Activated B cell treated with CpG ODN at 0.5 μM for 24 hours (primary cell): ENCODE measurements at regions of chr1 and their contacts with region 1.

Region 1: DNA sequence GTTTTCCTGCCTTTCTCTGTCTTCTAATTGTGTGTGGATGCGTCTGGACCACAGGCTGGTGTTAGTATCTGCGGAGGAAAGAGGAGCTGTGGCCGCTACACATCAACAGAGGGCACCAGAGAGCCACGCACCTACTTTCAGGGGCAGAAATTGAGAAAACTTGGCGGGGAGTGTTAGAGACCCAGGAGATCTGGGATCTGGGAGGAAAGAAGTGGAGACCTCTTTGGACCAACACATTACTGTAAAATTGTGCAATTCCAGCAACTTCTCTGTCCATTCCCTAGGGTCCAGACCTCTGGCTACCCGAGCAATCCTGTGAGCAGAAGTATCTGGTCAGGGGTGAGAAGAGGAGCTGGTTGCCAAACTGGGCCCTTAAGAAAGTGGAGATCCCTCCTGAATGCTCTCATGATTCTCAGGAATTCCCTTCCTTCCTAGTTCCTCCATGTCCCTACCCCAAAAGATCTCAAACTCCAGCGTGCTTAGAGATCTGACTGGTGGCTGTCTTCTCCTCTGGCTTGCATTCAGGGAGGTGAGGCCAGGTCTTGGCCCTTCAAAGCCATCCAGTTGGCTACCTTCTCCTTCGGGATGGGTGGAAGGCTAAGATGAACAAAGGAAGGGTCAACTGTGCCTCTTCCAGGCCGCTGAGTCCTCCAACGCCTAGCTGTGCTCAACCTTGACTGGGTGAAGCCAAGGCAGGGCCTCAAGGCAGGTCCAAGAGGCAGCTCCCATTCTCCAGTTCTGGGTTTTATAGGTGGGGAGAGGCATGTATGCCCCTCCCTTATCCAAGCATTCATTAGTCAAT is 1.2 kb upstream of the KIRREL1 start:
- DNase-seq: peak; percentile 46
- ATAC-seq: peak; percentile 68
- H3K4me3 Mint-ChIP-seq: peak overlapping the region; percentile 79
- H3K27ac Mint-ChIP-seq: no peak overlapping the region
- H3K4me1 Mint-ChIP-seq: peaks cover 16% of the 10 kb centered on the region
- H3K27me3 Mint-ChIP-seq: peaks cover 41% of the 10 kb centered on the region
- CTCF ChIP-seq: peak; percentile 30

Region 2: DNA sequence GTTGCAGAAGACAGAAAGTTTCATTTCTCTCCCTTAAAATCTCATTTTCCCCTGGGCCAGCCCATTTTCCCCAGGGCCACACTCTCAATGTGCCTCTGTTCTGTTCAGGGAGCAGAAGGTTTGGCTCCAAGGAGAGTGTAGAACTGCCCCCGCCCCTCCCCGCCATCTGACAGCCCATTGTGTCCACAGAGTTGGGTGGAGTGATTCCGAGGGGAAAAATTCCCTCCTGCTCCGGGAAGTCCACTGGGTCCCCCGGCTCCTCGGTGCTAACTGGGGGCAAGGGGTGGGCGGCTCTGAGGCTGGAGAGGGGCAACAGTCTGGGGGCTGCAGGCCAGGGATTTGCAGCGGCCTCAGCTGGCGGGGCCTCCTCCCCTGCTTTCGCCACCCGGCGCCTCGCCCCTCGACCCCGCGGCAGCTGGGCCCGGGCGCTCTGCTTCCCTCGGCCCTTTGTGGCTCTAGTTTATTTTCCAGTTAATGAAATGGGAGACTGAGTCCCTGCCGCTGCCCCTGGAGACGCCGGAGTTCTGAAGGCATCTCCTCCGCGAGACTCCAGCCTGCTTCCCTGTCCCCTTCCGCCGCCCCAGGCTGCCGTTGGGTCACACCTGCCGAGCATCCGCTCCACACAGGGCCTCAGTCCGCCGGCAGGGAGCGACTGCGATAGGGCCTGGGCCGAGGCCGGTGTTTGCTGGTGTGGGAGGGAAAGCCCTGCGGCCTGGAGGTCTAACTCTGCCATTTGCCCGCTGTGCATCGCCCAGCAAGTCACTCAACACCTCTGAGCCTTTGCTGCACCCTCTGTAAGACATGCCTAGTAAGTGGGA is 13.4 kb before region 1 on chr1:
- CTCF ChIA-PET with region 1: interaction called, 12 read pairs
- POLR2A ChIA-PET with region 1: no interaction called
- intact Hi-C with region 1: no loop called
- DNase-seq: no peak
- ATAC-seq: no peak
- H3K4me3 Mint-ChIP-seq: no peak overlapping the region
- H3K27ac Mint-ChIP-seq: no peak overlapping the region
- H3K4me1 Mint-ChIP-seq: no peaks in the 10 kb centered on the region
- H3K27me3 Mint-ChIP-seq: peaks cover 16% of the 10 kb centered on the region
- CTCF ChIP-seq: no peak

Region 3: DNA sequence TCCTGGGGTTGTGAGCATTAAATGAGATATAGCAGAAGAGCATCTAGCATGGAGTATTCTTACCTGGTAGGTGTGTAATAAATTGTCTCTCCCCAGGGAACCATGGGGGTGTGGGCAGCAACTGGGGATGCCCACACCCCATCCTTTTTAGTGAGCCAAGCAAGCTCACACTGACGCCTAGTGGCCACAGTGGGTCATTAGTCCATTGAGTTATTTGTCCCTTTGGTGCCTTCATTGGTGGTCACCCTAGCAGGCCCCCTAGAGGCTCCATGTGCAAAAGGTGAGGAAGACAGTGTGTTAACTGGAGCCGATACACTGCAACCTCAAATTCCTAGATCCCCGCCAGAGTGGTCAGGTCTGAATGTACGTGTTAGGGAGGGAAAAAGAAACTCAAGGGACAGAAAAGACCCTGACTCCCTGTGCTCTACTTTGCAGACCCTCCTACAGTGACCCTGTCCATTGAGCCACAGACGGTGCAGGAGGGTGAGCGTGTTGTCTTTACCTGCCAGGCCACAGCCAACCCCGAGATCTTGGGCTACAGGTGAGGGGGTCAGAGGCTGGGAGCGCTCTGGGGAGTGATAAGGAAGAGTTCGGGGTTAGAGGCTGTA is 95.2 kb after region 1 on chr1:
- CTCF ChIA-PET with region 1: interaction called, 6 read pairs
- POLR2A ChIA-PET with region 1: no interaction called
- intact Hi-C with region 1: loop called (anchors 1 kb)
- DNase-seq: no peak
- ATAC-seq: peak; percentile 70
- H3K4me3 Mint-ChIP-seq: no peak overlapping the region
- H3K27ac Mint-ChIP-seq: no peak overlapping the region
- H3K4me1 Mint-ChIP-seq: no peaks in the 10 kb centered on the region
- H3K27me3 Mint-ChIP-seq: peaks cover 8% of the 10 kb centered on the region
- CTCF ChIP-seq: no peak

Region 4: GRCh38 chr1:158527190-158527815 is 535.1 kb after region 1 on chr1:
- CTCF ChIA-PET with region 1: no interaction called
- POLR2A ChIA-PET with region 1: no interaction called
- intact Hi-C with region 1: loop called (anchors 1 kb)
- DNase-seq: no peak
- ATAC-seq: peak; percentile 34
- H3K4me3 Mint-ChIP-seq: no peak overlapping the region
- H3K27ac Mint-ChIP-seq: no peak overlapping the region
- H3K4me1 Mint-ChIP-seq: no peaks in the 10 kb centered on the region
- H3K27me3 Mint-ChIP-seq: peaks cover 34% of the 10 kb centered on the region
- CTCF ChIP-seq: no peak